GM18951 (cell line): ENCODE measurements at regions of chr1 and their contacts with region 1.

Region 1: DNA sequence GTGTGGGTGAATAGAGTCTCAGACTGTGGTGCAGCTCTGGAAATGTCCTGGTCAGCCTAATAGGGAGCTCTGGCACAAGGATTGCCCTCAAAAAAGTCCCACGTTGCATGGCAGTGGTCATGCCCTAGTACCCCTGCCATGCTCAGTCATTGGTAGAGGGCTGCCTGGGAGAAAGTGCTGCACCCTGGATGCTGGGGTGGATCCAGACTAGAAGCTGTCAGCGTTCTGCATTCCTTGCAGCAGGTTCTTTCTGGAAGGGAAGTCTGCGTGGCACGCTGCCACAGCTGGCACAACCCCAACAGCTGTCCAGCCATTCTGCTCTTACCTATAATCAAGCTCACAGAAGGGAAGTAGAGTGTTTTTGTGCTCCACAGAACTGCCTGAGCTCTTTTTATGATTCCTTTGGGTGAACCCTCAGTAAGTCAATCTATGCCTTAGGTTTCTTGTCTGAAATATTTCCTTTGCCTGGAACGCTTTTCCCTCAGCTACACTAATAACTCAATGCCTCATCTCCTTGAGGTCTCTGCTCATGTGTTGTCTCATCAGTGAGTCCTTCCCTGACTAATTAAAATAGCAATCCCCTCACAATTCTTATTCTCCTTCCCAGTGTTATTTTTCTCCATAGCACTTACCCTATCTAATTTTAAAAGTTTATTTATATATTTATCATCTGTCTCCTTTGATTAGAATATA is 61.5 kb upstream of the JAK1 start:
- POLR2A ChIP-seq: no peak

Region 2: DNA sequence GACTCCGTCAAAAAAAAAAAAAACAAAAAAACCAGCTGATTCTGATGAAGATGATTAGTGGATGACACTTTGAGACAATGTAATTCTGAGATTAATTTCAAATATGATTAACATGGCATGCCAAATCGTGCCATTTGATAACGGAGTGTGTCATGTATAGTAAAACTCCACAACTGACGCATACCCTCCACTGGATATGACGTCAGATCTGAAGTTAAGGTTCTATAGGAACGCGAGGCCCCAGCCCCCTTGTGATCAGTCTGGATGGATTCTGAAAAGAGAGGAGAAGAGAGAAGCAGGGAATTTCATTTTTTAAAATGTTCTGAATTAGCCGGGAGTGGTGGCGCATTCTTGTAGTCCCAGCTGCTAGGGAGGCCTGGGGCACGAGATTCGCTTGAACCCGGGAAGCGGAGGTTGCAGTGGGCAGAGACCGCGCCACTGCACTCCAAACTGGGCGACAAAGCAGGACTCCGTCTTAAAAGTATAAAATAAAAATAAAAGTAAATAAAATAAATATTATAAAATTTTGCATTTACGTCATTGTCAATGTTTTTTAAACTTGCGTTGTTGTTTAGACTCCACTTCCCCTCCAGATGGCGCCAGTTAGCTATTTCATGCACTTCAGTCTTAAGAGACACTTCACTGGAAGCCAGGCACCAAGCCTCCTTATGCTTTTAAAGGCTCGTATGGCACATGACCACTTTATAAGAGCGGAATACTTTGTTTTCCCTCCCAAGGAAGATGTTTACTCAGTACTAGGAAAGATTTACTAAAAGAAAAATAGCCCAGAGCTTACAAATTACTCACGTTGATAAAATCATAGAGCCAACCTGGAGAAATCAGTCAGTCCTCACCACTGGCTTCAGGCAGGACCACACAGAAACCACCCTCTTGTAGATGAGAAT is 758.9 kb before region 1 on chr1:
- in situ Hi-C with region 1: loop called (anchors 25 kb)
- POLR2A ChIP-seq: no peak

Region 3: DNA sequence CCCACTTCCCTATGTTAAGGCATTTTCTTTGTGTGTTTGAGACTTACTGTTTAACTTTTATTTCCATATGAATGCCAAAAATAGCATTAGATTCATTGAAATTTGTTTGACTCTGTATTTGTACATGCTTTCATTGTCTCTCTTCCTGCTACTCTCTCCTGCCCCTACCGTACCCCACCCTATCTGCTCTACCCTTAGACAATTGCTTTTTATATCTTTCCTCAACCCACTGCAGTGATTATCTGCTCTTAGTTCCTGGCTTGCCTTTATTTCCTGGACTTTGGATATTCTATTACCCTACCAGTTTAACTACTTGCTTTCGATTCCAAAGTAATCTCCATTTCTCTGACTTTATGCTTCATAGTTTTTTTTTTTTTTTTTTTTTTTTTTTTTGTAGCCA is 272.5 kb before region 1 on chr1:
- in situ Hi-C with region 1: no loop called
- POLR2A ChIP-seq: no peak